T-cell (primary cell): ENCODE measurements at regions of chr2 and their contacts with region 1.

Region 1: GRCh38 chr2:156341452-156342253 is 9.1 kb upstream of the NR4A2 start:
- DNase-seq: peak; percentile 56 to 92 (median 83)
- ATAC-seq: peak; percentile 76 to 78 (median 78)
- H3K4me3 ChIP-seq: peak overlapping the region; percentile 71 to 98
- H3K4me3 Mint-ChIP-seq: peak overlapping the region; percentile 89 to 95 (median 93)
- H3K27ac ChIP-seq: peak overlapping the region; percentile 100
- H3K27ac Mint-ChIP-seq: peak overlapping the region; percentile 95 to 98
- H3K4me1 ChIP-seq: peaks cover 5 to 13% of the 10 kb centered on the region in 2 experiments
- H3K4me1 Mint-ChIP-seq: peaks cover 35 to 50% (median 41%) of the 10 kb centered on the region in 3 donors
- H3K27me3 ChIP-seq: no peaks in the 10 kb centered on the region
- H3K27me3 Mint-ChIP-seq: no peaks in the 10 kb centered on the region

Region 2: GRCh38 chr2:156400706-156401678 is 59.3 kb after region 1 on chr2:
- CTCF ChIA-PET with region 1: interaction called in 1 of 2 experiments, 12 read pairs
- POLR2A ChIA-PET with region 1: interaction called, 10 to 16 read pairs
- DNase-seq: peak; percentile 56 to 93 (median 75)
- ATAC-seq: peak; percentile 82 to 87 (median 84)
- H3K4me3 ChIP-seq: peak overlapping the region; percentile 93 to 94
- H3K4me3 Mint-ChIP-seq: peak overlapping the region; percentile 88 to 92 (median 89)
- H3K27ac ChIP-seq: peak overlapping the region; percentile 98
- H3K27ac Mint-ChIP-seq: peak overlapping the region; percentile 94
- H3K4me1 ChIP-seq: peaks cover 8 to 11% of the 10 kb centered on the region in 2 experiments
- H3K4me1 Mint-ChIP-seq: peaks cover 24 to 38% (median 28%) of the 10 kb centered on the region in 3 donors
- H3K27me3 ChIP-seq: no peaks in the 10 kb centered on the region
- H3K27me3 Mint-ChIP-seq: peaks cover 0 to 2% of the 10 kb centered on the region in 2 donors

Region 3: DNA sequence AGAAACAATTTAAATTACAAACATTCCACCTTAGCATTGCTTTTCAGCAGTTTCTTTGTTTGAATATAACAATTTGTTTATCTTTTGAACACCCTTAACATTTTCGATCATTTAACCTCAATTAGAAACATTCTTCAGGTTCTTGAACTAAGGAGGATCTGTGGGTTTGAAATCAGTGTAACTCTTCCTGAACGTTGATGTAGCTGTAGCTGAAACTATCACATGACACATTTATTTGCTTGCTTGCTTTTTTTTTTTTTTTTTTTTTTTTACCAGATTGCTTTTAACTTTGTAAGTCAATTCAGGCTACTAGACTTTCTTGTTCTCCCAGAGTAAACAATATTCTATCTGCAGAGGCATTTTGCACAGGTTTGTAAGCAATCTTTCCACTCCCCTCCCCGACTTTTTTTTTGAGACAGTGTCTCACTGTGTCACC is 142.1 kb after region 1 on chr2:
- CTCF ChIA-PET with region 1: no interaction called
- POLR2A ChIA-PET with region 1: interaction called in 1 of 2 experiments, 12 read pairs
- DNase-seq: no peak
- ATAC-seq: no peak
- H3K4me3 ChIP-seq: no peak overlapping the region
- H3K4me3 Mint-ChIP-seq: no peak overlapping the region
- H3K27ac ChIP-seq: no peak overlapping the region
- H3K27ac Mint-ChIP-seq: no peak overlapping the region
- H3K4me1 ChIP-seq: no peaks in the 10 kb centered on the region
- H3K4me1 Mint-ChIP-seq: peaks cover 7 to 36% (median 26%) of the 10 kb centered on the region in 3 donors
- H3K27me3 ChIP-seq: no peaks in the 10 kb centered on the region
- H3K27me3 Mint-ChIP-seq: no peaks in the 10 kb centered on the region